Heart right ventricle (tissue), 16 donors: ENCODE measurements at regions of chr17 and their contacts with region 1.

Region 1: DNA sequence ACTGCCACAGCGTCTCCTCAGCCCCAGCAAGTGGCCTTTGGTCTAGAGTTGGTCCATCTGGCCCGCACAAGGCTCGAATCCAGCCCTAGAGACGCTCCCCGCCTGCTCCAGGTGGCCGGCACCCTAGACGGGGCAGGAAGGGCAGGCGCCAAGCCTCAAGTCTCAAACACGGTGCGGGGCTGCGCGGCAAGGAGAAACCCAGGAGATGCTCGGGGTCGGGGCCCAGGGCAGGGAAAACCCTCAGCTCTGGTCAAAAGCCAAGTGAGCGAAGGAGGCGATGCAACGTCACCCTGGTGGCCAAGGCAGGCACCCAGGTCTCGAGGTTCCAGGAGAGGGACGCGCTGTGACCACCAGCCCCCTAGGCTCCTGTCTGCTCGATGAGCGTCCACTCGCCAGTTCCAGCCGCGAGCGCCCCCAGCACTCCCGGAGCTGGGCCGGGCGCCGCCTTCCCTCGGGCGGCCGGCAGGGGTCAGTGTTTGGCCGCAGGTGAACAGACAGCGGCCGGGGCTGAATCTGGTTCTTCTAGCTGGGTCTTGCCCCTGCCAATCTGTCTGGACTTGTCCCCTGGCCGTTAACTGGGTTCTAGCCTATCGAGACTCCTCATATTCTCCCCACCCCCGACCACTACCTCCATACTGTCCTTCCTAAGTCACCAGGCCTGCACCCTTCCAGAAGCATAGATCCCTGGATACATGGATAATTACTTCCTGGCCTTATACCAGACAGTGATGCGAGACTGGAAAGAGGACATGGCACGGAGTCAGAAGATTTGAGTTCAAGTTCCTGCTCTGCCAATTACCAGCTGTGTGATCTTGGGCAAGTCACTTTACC is 44.0 kb downstream of the PRAC1 start:
- DNase-seq: peak; percentile 31 to 69
- ATAC-seq: peak; percentile 65 to 84 (median 74)
- H3K4me3 ChIP-seq: peak overlapping the region in 1 of 10 donors; percentile 5
- H3K27ac ChIP-seq: no peak overlapping the region
- H3K4me1 ChIP-seq: peaks cover 0 to 6% (median 4%) of the 10 kb centered on the region in 9 donors
- H3K27me3 ChIP-seq: peaks cover 4 to 97% (median 81%) of the 10 kb centered on the region in 7 donors
- CTCF ChIP-seq: peak; percentile 79 to 98 (median 91)

Region 2: GRCh38 chr17:49045376-49045775 is 367.0 kb after region 1 on chr17:
- intact Hi-C with region 1: loop called in 1 of 10 experiments (anchors 10 kb)
- DNase-seq: no peak
- ATAC-seq: no peak
- H3K4me3 ChIP-seq: no peak overlapping the region
- H3K27ac ChIP-seq: no peak overlapping the region
- H3K4me1 ChIP-seq: no peaks in the 10 kb centered on the region
- H3K27me3 ChIP-seq: peaks cover 0 to 47% (median 17%) of the 10 kb centered on the region in 7 donors
- CTCF ChIP-seq: no peak